PC-9 (cell line): ENCODE measurements at regions of chr15 and their contacts with region 1.

Region 1: DNA sequence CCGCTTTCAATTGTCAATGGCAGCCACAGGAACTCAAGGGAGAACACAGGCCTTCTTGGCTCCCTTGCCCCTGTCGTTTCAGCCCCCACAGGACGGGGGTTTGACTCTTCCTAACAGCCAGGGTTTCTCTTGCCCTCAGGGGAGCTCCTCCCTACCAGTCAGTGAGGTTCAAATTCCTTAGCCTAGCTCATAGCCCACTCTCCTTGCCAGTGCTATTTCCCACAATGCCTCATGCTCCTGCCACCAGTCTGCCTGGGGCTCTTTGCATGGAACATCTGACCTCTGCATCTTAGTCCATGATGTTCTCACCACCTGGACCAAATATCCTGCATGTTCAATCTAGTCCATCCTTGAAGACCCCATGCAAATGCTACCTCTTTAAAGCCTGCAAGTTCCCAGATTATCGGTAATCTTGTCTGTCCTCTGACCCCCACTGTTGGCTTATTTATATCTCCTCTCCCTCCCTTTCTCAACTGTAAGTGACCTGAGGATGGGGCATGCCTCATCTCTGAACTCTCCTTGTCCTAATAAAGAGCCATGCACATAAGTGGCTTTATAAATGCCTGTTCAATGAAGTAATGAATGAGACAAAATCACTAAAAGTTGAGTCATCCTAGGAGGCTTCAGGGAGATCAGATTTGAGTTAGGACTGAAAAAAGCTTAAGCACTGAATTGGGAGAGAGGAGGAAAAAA is 78.0 kb downstream of the MYO1E start:
- DNase-seq: peak; percentile 49 to 93
- H3K4me3 ChIP-seq: peak overlapping the region; percentile 25; the same call in 1 of the 2 replicates
- H3K27ac ChIP-seq: peak overlapping the region; percentile 97
- H3K4me1 ChIP-seq: peaks cover 98% of the 10 kb centered on the region
- H3K27me3 ChIP-seq: no peaks in the 10 kb centered on the region
- CTCF ChIP-seq: no peak

Region 2: DNA sequence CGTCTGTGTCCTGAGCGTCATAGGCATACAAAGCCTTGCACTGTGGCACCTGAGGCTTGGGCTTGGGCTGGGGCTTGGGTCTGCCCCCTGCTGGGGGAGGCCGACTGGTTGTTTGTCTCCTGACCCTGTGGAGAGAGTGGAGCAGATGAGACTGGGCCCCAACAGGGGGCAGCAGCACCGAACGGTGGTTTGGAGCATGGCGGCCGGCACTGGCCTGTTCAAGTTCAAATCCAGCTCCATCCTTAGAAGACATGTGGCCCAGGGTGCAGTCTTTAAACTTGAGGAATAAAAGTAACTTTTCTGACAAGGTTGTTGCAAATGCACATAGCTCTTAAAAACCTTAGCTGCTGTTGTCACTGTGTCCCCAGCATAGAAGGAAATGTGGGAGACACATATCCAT is 156.5 kb before region 1 on chr15:
- CTCF ChIA-PET with region 1: no interaction called
- POLR2A ChIA-PET with region 1: no interaction called
- intact Hi-C with region 1: no loop called
- DNase-seq: peak in 1 of 2 experiments; percentile 34
- H3K4me3 ChIP-seq: no peak overlapping the region
- H3K27ac ChIP-seq: no peak overlapping the region
- H3K4me1 ChIP-seq: no peaks in the 10 kb centered on the region
- H3K27me3 ChIP-seq: no peaks in the 10 kb centered on the region
- CTCF ChIP-seq: peak; percentile 56; the same call in 1 of the 2 replicates

Region 3: GRCh38 chr15:59191855-59192237 is 102.9 kb before region 1 on chr15:
- CTCF ChIA-PET with region 1: no interaction called
- POLR2A ChIA-PET with region 1: interaction called, 12 read pairs
- intact Hi-C with region 1: no loop called
- DNase-seq: peak; percentile 65 to 97
- H3K4me3 ChIP-seq: peak overlapping the region; percentile 45; the same call in 1 of the 2 replicates
- H3K27ac ChIP-seq: peak overlapping the region; percentile 99
- H3K4me1 ChIP-seq: peaks cover 32% of the 10 kb centered on the region
- H3K27me3 ChIP-seq: no peaks in the 10 kb centered on the region
- CTCF ChIP-seq: no peak